Activated B cell treated with CpG ODN at 0.5 μM for 24 hours (primary cell): ENCODE measurements at regions of chr7 and their contacts with region 1.

Region 1: GRCh38 chr7:74254129-74254857 is at the start of gene RFC2:
- DNase-seq: peak; percentile 100
- ATAC-seq: peak; percentile 92
- H3K4me3 Mint-ChIP-seq: peak within 1 kb of the TSS; percentile 95
- H3K27ac Mint-ChIP-seq: peak within 1 kb of the TSS; percentile 93
- H3K4me1 Mint-ChIP-seq: peaks cover 50% of the 10 kb centered on the region
- H3K27me3 Mint-ChIP-seq: no peaks in the 10 kb centered on the region
- CTCF ChIP-seq: no peak
- total RNA-seq, gene RFC2: 44.0 and 45.8 TPM in 2 replicates

Region 2: DNA sequence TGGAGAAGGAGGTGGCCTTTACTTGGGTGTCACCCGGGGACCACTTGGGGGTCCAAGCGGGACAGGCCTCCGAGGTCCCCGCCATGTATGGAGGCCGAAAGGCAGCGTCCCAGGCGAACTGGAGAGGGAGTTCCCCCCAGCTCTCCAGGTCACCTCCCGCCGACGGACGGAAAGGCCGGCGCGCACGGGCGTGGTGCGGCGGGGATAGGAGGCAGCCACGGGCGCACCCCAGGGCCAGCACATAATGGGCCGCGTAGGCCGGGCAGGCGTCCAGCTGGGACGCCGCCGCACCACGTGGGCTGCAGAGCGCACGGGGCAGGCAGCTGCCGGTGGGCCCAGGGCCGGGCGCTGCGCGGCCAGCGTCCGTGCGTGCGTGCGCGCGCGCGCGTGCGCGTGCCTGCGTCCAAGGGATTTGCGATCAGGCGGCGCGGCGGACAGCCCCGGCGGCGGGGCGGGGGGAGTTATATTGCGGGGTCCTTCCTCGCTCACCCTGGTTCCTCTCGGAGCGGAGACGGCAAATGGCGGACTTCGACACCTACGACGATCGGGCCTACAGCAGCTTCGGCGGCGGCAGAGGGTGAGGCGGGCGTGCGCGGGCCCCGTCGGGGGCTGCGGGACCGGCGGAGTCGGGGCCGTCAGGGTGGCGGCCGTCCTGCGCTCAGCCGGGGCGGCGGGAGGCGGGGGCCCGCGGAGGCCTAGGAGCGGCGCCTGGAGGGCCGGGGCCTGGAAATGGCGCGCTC is 80.3 kb before region 1 on chr7 and contains the start of gene EIF4H:
- CTCF ChIA-PET with region 1: no interaction called
- POLR2A ChIA-PET with region 1: no interaction called
- intact Hi-C with region 1: loop called (anchors 1 kb)
- DNase-seq: peak; percentile 99
- ATAC-seq: peak; percentile 80
- H3K4me3 Mint-ChIP-seq: peak within 1 kb of the TSS; percentile 91
- H3K27ac Mint-ChIP-seq: peak within 1 kb of the TSS; percentile 89
- H3K4me1 Mint-ChIP-seq: peaks cover 47% of the 10 kb centered on the region
- H3K27me3 Mint-ChIP-seq: no peaks in the 10 kb centered on the region
- CTCF ChIP-seq: no peak
- total RNA-seq, gene EIF4H: 263 and 280 TPM in 2 replicates

Region 3: GRCh38 chr7:74212656-74213055 is 41.6 kb before region 1 on chr7:
- CTCF ChIA-PET with region 1: no interaction called
- POLR2A ChIA-PET with region 1: interaction called, 24 read pairs
- intact Hi-C with region 1: loop called (anchors 1 kb)
- DNase-seq: no peak
- ATAC-seq: no peak
- H3K4me3 Mint-ChIP-seq: peak overlapping the region; percentile 90
- H3K27ac Mint-ChIP-seq: peak overlapping the region; percentile 80
- H3K4me1 Mint-ChIP-seq: peaks cover 66% of the 10 kb centered on the region
- H3K27me3 Mint-ChIP-seq: no peaks in the 10 kb centered on the region
- CTCF ChIP-seq: no peak

Region 4: DNA sequence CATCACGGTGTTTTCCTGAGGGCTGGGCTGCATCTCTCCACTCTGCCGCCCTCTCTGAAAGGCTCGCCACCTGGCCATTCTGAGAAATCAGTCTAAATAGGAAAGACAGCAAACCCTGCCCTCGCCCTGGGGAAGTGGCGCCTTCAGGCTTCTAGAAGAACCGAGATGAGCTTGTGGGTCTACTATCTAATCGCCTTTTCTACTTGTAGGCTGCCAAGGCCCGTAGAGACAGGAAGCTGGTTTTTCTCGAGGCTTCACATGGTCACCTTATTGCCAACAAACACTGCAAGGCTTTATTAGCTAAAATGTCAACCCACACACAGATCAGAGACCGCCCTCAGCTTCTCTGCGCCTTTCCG is 23.1 kb before region 1 on chr7:
- CTCF ChIA-PET with region 1: no interaction called
- POLR2A ChIA-PET with region 1: interaction called, 19 read pairs
- intact Hi-C with region 1: loop called (anchors 1 kb)
- DNase-seq: peak; percentile 63
- ATAC-seq: peak; percentile 85
- H3K4me3 Mint-ChIP-seq: peak overlapping the region; percentile 55
- H3K27ac Mint-ChIP-seq: peak overlapping the region; percentile 92
- H3K4me1 Mint-ChIP-seq: peaks cover 68% of the 10 kb centered on the region
- H3K27me3 Mint-ChIP-seq: no peaks in the 10 kb centered on the region
- CTCF ChIP-seq: no peak

Region 5: GRCh38 chr7:74242122-74242443 is 12.2 kb before region 1 on chr7:
- CTCF ChIA-PET with region 1: no interaction called
- POLR2A ChIA-PET with region 1: interaction called, 9 read pairs
- intact Hi-C with region 1: loop called (anchors 1 kb)
- DNase-seq: no peak
- ATAC-seq: peak; percentile 30
- H3K4me3 Mint-ChIP-seq: peak overlapping the region; percentile 74
- H3K27ac Mint-ChIP-seq: peak overlapping the region; percentile 81
- H3K4me1 Mint-ChIP-seq: peaks cover 32% of the 10 kb centered on the region
- H3K27me3 Mint-ChIP-seq: no peaks in the 10 kb centered on the region
- CTCF ChIP-seq: no peak

Region 6: GRCh38 chr7:74272305-74273038 is 18.2 kb after region 1 on chr7:
- CTCF ChIA-PET with region 1: no interaction called
- POLR2A ChIA-PET with region 1: interaction called, 7 read pairs
- intact Hi-C with region 1: loop called (anchors 2 kb)
- DNase-seq: peak; percentile 71
- ATAC-seq: peak; percentile 81
- H3K4me3 Mint-ChIP-seq: peak overlapping the region; percentile 70
- H3K27ac Mint-ChIP-seq: peak overlapping the region; percentile 80
- H3K4me1 Mint-ChIP-seq: peaks cover 55% of the 10 kb centered on the region
- H3K27me3 Mint-ChIP-seq: no peaks in the 10 kb centered on the region
- CTCF ChIP-seq: no peak

Region 7: GRCh38 chr7:74617180-74617744 is 363.0 kb after region 1 on chr7:
- CTCF ChIA-PET with region 1: no interaction called
- POLR2A ChIA-PET with region 1: interaction called, 12 read pairs
- intact Hi-C with region 1: no loop called
- DNase-seq: peak; percentile 20
- ATAC-seq: peak; percentile 53
- H3K4me3 Mint-ChIP-seq: peak overlapping the region; percentile 72
- H3K27ac Mint-ChIP-seq: peak overlapping the region; percentile 85
- H3K4me1 Mint-ChIP-seq: peaks cover 30% of the 10 kb centered on the region
- H3K27me3 Mint-ChIP-seq: no peaks in the 10 kb centered on the region
- CTCF ChIP-seq: no peak